H1 (cell line): ENCODE measurements at regions of chr15 and their contacts with region 1.

Region 1: GRCh38 chr15:80776420-80777045 is 2.6 kb upstream of the CEMIP start:
- DNase-seq: peak; percentile 36 to 83
- H3K4me3 ChIP-seq: no peak overlapping the region
- H3K27ac ChIP-seq: no peak overlapping the region
- H3K4me1 ChIP-seq: peaks cover 0 to 7% (median 4%) of the 10 kb centered on the region in 4 experiments; a peak in 5 of 7 replicates
- H3K27me3 ChIP-seq: peaks cover 4 to 40% (median 33%) of the 10 kb centered on the region in 4 experiments
- CTCF ChIP-seq: peak; percentile 76 to 89 (median 88)
- EP300 ChIP-seq: no peak
- POLR2A ChIP-seq: no peak
- RAD21 ChIP-seq: peak; percentile 93

Region 2: GRCh38 chr15:80523746-80524145 is 252.8 kb before region 1 on chr15:
- CTCF ChIA-PET with region 1: no interaction called
- POLR2A ChIA-PET with region 1: no interaction called
- DNase-seq: no peak
- H3K4me3 ChIP-seq: no peak overlapping the region
- H3K27ac ChIP-seq: no peak overlapping the region
- H3K4me1 ChIP-seq: no peaks in the 10 kb centered on the region
- H3K27me3 ChIP-seq: no peaks in the 10 kb centered on the region
- CTCF ChIP-seq: no peak
- EP300 ChIP-seq: no peak
- POLR2A ChIP-seq: no peak
- RAD21 ChIP-seq: no peak

Region 3: GRCh38 chr15:80567721-80568157 is 208.8 kb before region 1 on chr15:
- CTCF ChIA-PET with region 1: interaction called, 133 read pairs
- POLR2A ChIA-PET with region 1: interaction called, 9 read pairs
- DNase-seq: peak in 1 of 2 experiments; percentile 59
- H3K4me3 ChIP-seq: no peak overlapping the region
- H3K27ac ChIP-seq: no peak overlapping the region
- H3K4me1 ChIP-seq: peaks cover 0 to 13% (median 3%) of the 10 kb centered on the region in 4 experiments; a peak in 4 of 7 replicates
- H3K27me3 ChIP-seq: no peaks in the 10 kb centered on the region
- CTCF ChIP-seq: peak; percentile 30 to 98 (median 91)
- EP300 ChIP-seq: no peak
- POLR2A ChIP-seq: no peak
- RAD21 ChIP-seq: peak; percentile 90 to 93

Region 4: DNA sequence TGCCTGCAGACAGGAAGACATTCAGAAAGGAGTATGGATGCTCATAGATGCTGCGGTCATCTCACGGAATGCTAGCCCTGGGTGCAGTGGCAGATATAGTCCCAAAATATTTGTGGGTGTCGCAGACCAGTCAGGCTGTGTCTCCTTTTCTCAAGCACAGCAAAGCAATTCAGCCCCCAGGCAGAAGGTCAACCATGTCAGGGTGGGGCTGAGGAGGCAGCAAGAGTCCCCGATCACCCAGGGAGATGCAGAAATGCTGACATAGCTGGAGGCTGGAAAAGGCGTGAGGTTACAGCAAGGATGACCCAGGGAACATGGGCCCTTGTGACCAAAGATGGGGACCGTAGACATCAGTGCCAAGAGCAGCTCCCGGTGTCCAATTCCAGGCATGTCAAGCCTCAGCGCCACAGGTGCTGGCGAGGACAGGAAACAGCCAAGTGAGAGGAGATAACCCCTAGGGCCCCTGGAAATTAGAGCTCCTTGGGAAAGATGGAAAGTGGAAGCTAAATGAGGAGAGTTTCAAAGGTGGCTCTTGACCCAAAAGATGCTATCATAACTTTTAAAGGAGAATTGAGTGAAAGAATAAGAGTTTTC is 162.7 kb before region 1 on chr15:
- CTCF ChIA-PET with region 1: interaction called, 14 read pairs
- POLR2A ChIA-PET with region 1: no interaction called
- DNase-seq: peak in 1 of 2 experiments; percentile 39
- H3K4me3 ChIP-seq: no peak overlapping the region
- H3K27ac ChIP-seq: no peak overlapping the region
- H3K4me1 ChIP-seq: peaks cover 0 to 6% (median 3%) of the 10 kb centered on the region in 4 experiments; a peak in 2 of 7 replicates
- H3K27me3 ChIP-seq: peaks cover 0 to 3% (median 0%) of the 10 kb centered on the region in 4 experiments; a peak in 1 of 7 replicates
- CTCF ChIP-seq: no peak
- EP300 ChIP-seq: no peak
- POLR2A ChIP-seq: no peak
- RAD21 ChIP-seq: no peak

Region 5: GRCh38 chr15:80660122-80660521 is 116.4 kb before region 1 on chr15:
- CTCF ChIA-PET with region 1: interaction called, 107 read pairs
- POLR2A ChIA-PET with region 1: interaction called, 4 read pairs
- DNase-seq: peak in 1 of 2 experiments; percentile 52
- H3K4me3 ChIP-seq: no peak overlapping the region
- H3K27ac ChIP-seq: no peak overlapping the region
- H3K4me1 ChIP-seq: no peaks in the 10 kb centered on the region
- H3K27me3 ChIP-seq: no peaks in the 10 kb centered on the region; a peak in 1 of 7 replicates
- CTCF ChIP-seq: peak; percentile 57 to 81 (median 75)
- EP300 ChIP-seq: no peak
- POLR2A ChIP-seq: no peak
- RAD21 ChIP-seq: peak; percentile 83 to 86

Region 6: DNA sequence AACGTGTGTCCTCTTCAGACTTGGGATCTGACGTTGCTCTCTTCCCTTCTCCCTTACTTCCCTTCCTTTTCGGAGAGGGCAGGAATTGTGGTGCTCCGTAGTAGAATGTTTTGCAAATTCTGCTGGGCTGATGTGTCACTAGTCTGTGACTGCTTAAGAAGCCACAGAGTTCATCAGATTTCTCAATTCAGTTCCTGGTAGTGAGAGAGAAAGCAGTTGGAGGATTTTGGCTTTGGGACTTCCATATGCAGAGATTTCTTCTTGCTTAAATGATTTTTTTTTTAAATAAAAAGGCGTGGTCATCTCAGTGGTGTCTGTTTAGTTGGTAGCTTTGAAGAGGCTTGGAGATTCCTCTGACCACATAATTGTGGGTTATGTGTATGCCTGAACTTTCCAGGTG is 12.8 kb after region 1 on chr15:
- CTCF ChIA-PET with region 1: interaction called, 29 read pairs
- POLR2A ChIA-PET with region 1: no interaction called
- DNase-seq: no peak
- H3K4me3 ChIP-seq: no peak overlapping the region
- H3K27ac ChIP-seq: no peak overlapping the region
- H3K4me1 ChIP-seq: no peaks in the 10 kb centered on the region
- H3K27me3 ChIP-seq: no peaks in the 10 kb centered on the region; a peak in 1 of 7 replicates
- CTCF ChIP-seq: no peak
- EP300 ChIP-seq: no peak
- POLR2A ChIP-seq: no peak
- RAD21 ChIP-seq: no peak

Region 7: GRCh38 chr15:80866936-80867335 is 90.4 kb after region 1 on chr15:
- CTCF ChIA-PET with region 1: interaction called, 29 read pairs
- POLR2A ChIA-PET with region 1: interaction called, 4 read pairs
- DNase-seq: peak in 1 of 2 experiments; percentile 36
- H3K4me3 ChIP-seq: peak overlapping the region in 1 of 4 experiments; percentile 23; a peak in 2 of 8 replicates
- H3K27ac ChIP-seq: no peak overlapping the region
- H3K4me1 ChIP-seq: peaks cover 6 to 21% (median 17%) of the 10 kb centered on the region in 4 experiments
- H3K27me3 ChIP-seq: no peaks in the 10 kb centered on the region; a peak in 1 of 7 replicates
- CTCF ChIP-seq: no peak
- EP300 ChIP-seq: no peak
- POLR2A ChIP-seq: no peak
- RAD21 ChIP-seq: no peak